Endothelial cell of umbilical vein (primary cell): ENCODE measurements at regions of chr7 and their contacts with region 1.

Region 1: DNA sequence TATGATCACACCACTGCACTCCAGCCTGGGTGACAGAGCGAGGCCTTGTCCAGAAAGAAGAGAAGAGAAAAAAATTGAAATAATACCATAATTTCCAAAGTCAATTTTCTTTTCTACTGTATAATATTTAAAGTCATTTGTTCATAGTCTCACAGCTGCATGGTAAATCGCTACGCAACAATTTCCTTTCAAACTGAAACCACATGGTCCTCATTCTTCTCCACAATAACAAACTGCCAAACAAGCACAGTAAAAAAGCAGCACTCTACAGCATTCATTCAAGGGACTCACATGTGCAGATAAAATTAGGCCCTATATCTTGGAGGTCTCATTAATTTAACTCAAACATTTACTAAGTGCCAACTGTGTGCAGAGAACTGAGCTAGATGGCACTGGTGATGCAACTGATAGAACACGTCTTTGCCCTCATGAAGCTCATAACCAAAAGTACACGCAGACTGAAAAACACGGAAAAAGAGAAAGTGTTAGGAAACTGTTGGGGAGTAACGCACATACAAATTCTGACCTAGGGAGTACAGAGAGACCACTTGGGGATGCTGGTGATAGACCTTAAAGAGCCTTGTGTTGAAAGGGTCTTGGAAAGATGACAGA is 68.4 kb upstream of the SRRM3 start:
- DNase-seq: no peak
- H3K4me3 ChIP-seq: no peak overlapping the region
- H3K27ac ChIP-seq: no peak overlapping the region
- H3K4me1 ChIP-seq: no peaks in the 10 kb centered on the region
- H3K27me3 ChIP-seq: peaks cover 4 to 8% of the 10 kb centered on the region in 2 experiments
- CTCF ChIP-seq: no peak
- POLR2A ChIP-seq: no peak

Region 2: GRCh38 chr7:74153758-74154157 is 1979.5 kb before region 1 on chr7:
- CTCF ChIA-PET with region 1: no interaction called
- POLR2A ChIA-PET with region 1: no interaction called
- dilution Hi-C with region 1: no loop called
- intact Hi-C with region 1: no loop called
- DNase-seq: no peak
- H3K4me3 ChIP-seq: no peak overlapping the region
- H3K27ac ChIP-seq: no peak overlapping the region
- H3K4me1 ChIP-seq: no peaks in the 10 kb centered on the region
- H3K27me3 ChIP-seq: no peaks in the 10 kb centered on the region
- CTCF ChIP-seq: no peak
- POLR2A ChIP-seq: no peak

Region 3: DNA sequence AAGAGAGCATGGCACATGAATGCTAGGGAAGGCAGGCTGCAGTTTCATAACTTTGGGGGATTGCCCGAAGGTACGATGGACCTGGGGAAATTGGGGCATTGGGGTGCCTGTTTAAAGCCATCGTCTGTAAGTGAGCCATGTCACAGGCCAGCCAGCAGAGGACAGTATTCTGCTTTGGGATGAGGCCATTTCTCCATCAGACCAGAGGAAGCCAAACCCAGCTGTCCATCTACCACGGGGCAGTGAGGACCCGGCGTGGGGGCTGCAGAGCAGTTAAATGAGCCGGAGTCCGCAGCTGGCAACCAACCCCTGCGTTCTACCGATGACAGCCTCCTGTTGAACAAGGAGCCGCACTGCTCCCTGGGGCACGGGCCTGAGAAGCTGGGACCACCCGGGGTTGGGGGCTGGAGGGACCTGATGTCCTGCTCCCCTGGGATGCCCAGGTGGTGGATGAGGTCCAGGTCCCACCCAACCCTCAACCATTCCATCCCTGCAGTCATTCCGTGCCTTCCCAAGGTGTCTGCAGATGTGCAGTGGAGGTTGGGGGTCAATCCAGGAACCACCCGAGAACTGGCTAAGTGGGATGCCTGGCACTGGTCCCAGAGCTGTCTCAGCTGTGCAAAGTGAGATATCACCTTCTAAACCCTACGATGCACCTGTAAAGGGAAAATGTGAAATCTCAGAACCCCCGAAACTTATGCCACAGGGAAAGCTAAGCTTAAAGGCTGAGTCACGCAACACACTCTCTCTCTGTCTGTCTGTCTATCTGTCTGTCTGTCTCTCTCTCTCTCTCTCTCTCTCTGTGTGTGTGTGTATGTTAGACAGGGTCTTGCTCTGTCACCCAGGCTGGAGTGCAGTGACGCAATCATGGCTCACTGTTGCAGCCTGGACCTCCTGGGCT is 266.5 kb before region 1 on chr7:
- CTCF ChIA-PET with region 1: interaction called, 17 read pairs
- POLR2A ChIA-PET with region 1: no interaction called
- dilution Hi-C with region 1: no loop called
- intact Hi-C with region 1: loop called (anchors 2 kb)
- DNase-seq: peak; percentile 66
- H3K4me3 ChIP-seq: no peak overlapping the region
- H3K27ac ChIP-seq: no peak overlapping the region
- H3K4me1 ChIP-seq: no peaks in the 10 kb centered on the region
- H3K27me3 ChIP-seq: no peaks in the 10 kb centered on the region
- CTCF ChIP-seq: peak; percentile 84 to 95
- POLR2A ChIP-seq: no peak

Region 4: GRCh38 chr7:76047811-76048667 is 85.2 kb before region 1 on chr7 and contains the starts of genes MDH2 and STYXL1:
- CTCF ChIA-PET with region 1: interaction called, 8 read pairs
- POLR2A ChIA-PET with region 1: no interaction called
- dilution Hi-C with region 1: no loop called
- intact Hi-C with region 1: loop called (anchors 1 kb)
- DNase-seq: peak; percentile 97
- H3K4me3 ChIP-seq: peak within 1 kb of the TSS; percentile 79 to 98 (median 94)
- H3K27ac ChIP-seq: peak within 1 kb of the TSS; percentile 63
- H3K4me1 ChIP-seq: peaks cover 4% of the 10 kb centered on the region
- H3K27me3 ChIP-seq: no peaks in the 10 kb centered on the region
- CTCF ChIP-seq: no peak
- POLR2A ChIP-seq: peak; percentile 87
- total RNA-seq, gene MDH2: 168 and 175 TPM in 2 replicates
- total RNA-seq, gene STYXL1: 23.0 and 24.3 TPM in 2 replicates

Region 5: DNA sequence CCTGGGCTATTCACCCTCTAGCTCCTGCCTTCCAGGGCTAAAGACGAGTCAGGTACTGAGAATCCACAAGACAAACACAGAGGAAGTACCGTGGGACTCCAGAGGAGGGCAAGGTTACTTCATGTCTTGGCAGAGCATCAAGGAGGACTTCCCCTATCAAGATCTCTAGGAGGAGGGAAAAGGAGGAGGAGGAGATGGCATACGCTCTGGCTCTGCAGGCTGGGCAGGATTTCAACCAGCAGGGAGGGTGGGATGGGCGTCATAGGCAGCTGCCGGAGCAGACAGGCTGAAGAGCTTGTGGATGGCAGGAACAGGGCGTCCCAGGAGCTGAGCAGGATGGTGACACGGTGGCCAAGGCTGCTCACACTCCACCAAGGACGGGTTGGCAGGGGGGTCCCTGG is 64.0 kb before region 1 on chr7:
- CTCF ChIA-PET with region 1: interaction called, 63 read pairs
- POLR2A ChIA-PET with region 1: no interaction called
- dilution Hi-C with region 1: no loop called
- intact Hi-C with region 1: loop called (anchors 1 kb)
- DNase-seq: peak; percentile 61
- H3K4me3 ChIP-seq: no peak overlapping the region
- H3K27ac ChIP-seq: no peak overlapping the region
- H3K4me1 ChIP-seq: no peaks in the 10 kb centered on the region
- H3K27me3 ChIP-seq: no peaks in the 10 kb centered on the region
- CTCF ChIP-seq: peak; percentile 9 to 20
- POLR2A ChIP-seq: no peak

Region 6: GRCh38 chr7:76282344-76283253 is 149.3 kb after region 1 on chr7:
- CTCF ChIA-PET with region 1: no interaction called
- POLR2A ChIA-PET with region 1: no interaction called
- dilution Hi-C with region 1: no loop called
- intact Hi-C with region 1: no loop called
- DNase-seq: no peak
- H3K4me3 ChIP-seq: peak overlapping the region in 2 of 3 experiments; percentile 29 to 42
- H3K27ac ChIP-seq: no peak overlapping the region
- H3K4me1 ChIP-seq: no peaks in the 10 kb centered on the region
- H3K27me3 ChIP-seq: peaks cover 14 to 23% of the 10 kb centered on the region in 2 experiments
- CTCF ChIP-seq: no peak
- POLR2A ChIP-seq: no peak

Region 7: GRCh38 chr7:77338883-77339629 is 1205.8 kb after region 1 on chr7:
- CTCF ChIA-PET with region 1: no interaction called
- POLR2A ChIA-PET with region 1: no interaction called
- dilution Hi-C with region 1: no loop called
- intact Hi-C with region 1: no loop called
- DNase-seq: no peak
- H3K4me3 ChIP-seq: no peak overlapping the region
- H3K27ac ChIP-seq: no peak overlapping the region
- H3K4me1 ChIP-seq: peaks cover 8% of the 10 kb centered on the region
- H3K27me3 ChIP-seq: no peaks in the 10 kb centered on the region
- CTCF ChIP-seq: no peak
- POLR2A ChIP-seq: no peak